Activated CD8-positive, alpha-beta T cell treated with anti-CD3 and anti-CD28 coated beads, Interleukin-2, amount 10 ng/mL, durations not matched to agents 7 days and 5 days (primary cell): ENCODE measurements at regions of chr19 and their contacts with region 1.

Region 1: GRCh38 chr19:55605207-55605636 is 225 bp upstream of the ZNF865 start:
- DNase-seq: peak; percentile 99
- ATAC-seq: peak; percentile 84
- H3K4me3 Mint-ChIP-seq: peak overlapping the region; percentile 83
- H3K27ac Mint-ChIP-seq: peak overlapping the region; percentile 94
- H3K4me1 Mint-ChIP-seq: peaks cover 61% of the 10 kb centered on the region
- H3K27me3 Mint-ChIP-seq: no peaks in the 10 kb centered on the region

Region 2: DNA sequence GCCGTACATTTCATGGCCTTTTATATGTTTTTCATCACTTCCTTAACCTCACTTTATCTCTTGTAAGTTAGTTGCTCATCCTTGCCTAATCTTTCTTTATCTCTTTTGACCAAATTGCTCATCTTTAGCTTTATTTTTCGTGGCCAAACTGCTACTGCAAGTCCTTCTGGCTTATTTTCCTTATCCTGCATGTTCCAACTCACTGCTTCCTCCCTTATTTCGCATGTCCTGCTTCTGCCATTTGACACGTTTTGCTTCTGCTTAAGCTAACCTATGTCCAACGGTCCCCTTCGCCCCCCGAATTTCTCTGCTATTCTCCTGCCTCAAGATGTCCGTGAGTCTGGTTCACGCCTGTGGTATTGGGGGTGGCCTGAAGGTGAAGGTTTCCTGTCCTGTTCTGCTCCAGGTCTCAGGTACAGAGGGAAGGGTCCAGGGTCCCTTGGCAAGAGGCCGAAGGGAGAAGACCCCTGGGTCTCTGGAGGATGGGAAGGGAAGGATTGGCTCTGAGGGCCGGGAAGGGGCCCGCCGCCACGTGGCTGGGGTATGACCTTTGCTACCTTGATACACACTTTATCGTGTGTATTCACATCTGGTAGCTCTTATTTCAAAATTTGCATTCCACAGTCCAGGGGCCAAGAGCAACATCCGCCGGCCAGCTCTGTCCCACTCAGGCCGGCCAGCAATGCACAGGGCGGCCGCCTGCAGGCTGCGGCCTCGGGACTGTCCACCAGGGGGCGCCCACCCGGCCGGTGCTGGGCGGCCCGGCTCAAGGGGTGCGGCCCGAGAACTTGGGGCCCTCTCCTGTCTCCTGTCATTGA is 137.8 kb before region 1 on chr19:
- CTCF ChIA-PET with region 1: interaction called, 11 read pairs
- POLR2A ChIA-PET with region 1: no interaction called
- DNase-seq: peak; percentile 71
- ATAC-seq: peak; percentile 89
- H3K4me3 Mint-ChIP-seq: no peak overlapping the region
- H3K27ac Mint-ChIP-seq: no peak overlapping the region
- H3K4me1 Mint-ChIP-seq: peaks cover 3% of the 10 kb centered on the region
- H3K27me3 Mint-ChIP-seq: no peaks in the 10 kb centered on the region

Region 3: DNA sequence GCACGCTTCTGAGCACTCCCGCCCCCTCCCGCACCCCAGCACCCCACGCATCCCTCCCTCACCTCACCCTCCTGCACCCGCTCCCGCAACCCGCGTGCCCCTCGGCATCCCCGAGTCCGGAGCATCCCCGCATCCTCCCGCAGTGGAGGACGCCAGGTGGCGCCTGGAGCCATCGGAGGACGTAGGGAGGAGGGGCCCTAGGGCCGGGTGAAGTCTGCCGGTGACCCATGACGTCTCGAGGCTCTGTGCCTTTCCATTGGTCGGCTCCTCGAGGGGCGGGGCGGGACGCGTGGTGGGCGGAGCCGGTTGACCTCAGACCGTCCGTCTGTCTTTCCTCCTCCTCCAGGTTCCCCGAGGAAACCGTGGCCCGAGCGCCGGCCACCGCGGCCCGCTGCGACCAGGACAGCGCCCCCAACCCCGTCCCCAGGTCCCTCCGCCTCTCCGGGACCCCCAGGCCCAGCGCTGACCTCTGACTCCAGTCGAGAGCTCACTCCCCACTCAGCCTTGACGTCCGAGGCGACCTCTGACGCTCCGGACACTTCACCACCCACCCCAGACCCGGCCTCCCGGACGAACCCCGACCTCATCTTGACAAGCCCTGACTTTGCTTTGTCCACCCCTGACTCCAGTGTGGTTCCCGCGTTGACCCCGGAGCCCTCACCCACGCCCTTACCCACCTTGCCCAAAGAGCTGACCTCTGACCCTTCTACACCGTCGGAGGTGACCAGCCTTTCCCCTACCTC is 88.2 kb before region 1 on chr19:
- CTCF ChIA-PET with region 1: interaction called, 13 read pairs
- POLR2A ChIA-PET with region 1: no interaction called
- DNase-seq: peak; percentile 93
- ATAC-seq: peak; percentile 100
- H3K4me3 Mint-ChIP-seq: peak overlapping the region; percentile 49
- H3K27ac Mint-ChIP-seq: peak overlapping the region; percentile 73
- H3K4me1 Mint-ChIP-seq: peaks cover 5% of the 10 kb centered on the region
- H3K27me3 Mint-ChIP-seq: no peaks in the 10 kb centered on the region

Region 4: DNA sequence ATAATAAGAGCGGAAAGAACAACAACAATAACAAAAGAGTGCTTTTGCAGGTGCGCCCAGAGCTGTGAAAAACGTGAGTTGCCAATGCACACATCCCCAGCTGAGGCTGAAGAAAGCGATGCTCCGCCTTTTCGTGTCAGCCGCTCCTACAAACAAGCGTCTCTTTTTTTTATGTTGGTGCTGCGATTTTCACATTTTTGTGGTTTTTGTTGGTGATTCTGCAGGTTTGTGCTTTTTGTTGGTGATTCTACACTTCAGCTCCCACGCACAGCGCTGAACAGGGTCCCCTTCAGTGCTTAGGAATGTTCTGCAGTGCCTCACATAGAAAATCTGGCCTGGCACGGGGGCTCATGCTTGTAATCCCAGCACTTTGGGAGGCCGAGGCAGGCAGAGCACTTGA is 52.6 kb before region 1 on chr19:
- CTCF ChIA-PET with region 1: no interaction called
- POLR2A ChIA-PET with region 1: no interaction called
- DNase-seq: no peak
- ATAC-seq: no peak
- H3K4me3 Mint-ChIP-seq: no peak overlapping the region
- H3K27ac Mint-ChIP-seq: no peak overlapping the region
- H3K4me1 Mint-ChIP-seq: no peaks in the 10 kb centered on the region
- H3K27me3 Mint-ChIP-seq: no peaks in the 10 kb centered on the region

Region 5: GRCh38 chr19:55563261-55563690 is 41.9 kb before region 1 on chr19:
- CTCF ChIA-PET with region 1: no interaction called
- POLR2A ChIA-PET with region 1: no interaction called
- DNase-seq: no peak
- ATAC-seq: no peak
- H3K4me3 Mint-ChIP-seq: no peak overlapping the region
- H3K27ac Mint-ChIP-seq: no peak overlapping the region
- H3K4me1 Mint-ChIP-seq: no peaks in the 10 kb centered on the region
- H3K27me3 Mint-ChIP-seq: peaks cover 2% of the 10 kb centered on the region

Region 6: GRCh38 chr19:55586976-55587668 is 18.1 kb before region 1 on chr19:
- CTCF ChIA-PET with region 1: interaction called, 11 read pairs
- POLR2A ChIA-PET with region 1: no interaction called
- DNase-seq: peak; percentile 95
- ATAC-seq: peak; percentile 99
- H3K4me3 Mint-ChIP-seq: peak overlapping the region; percentile 72
- H3K27ac Mint-ChIP-seq: no peak overlapping the region
- H3K4me1 Mint-ChIP-seq: peaks cover 21% of the 10 kb centered on the region
- H3K27me3 Mint-ChIP-seq: peaks cover 21% of the 10 kb centered on the region